ENCODE measurements at regions of chr3 and their contacts with region 1.

Region 1: DNA sequence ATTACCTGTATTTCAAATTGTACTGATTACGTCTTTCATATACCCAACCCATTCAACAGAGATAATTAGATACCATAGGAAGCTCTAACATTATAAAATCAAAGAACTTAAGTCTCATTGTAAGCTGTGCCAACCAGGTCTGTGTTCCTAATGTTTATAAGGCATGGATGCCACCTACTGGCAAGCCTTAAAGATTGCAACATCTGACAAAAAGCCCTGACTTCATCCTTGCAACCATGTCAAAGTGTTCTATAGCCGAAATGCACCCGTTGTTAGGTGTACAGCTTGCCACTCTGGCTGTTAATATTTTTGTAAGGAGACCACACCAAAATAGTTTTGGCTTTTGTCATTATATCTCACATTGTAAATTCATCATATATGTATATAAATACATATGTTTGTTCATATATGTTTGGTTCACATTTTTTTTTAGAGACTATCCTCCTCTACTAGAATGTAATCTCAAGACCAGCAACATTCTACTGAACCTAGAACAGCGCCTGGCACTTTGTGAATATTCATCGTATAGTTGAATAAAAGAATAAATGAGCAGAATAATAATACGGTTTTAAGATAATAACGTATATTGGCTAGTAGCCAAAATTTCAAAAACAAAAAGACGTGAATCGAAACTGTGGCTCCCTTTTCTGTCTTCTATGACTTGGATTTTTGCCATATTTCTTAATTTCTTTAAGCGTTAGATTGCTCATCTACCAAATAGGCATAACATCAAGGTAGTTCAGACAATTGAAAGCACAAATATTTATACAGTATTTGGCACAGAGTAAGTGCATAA is 258.1 kb downstream of the TBL1XR1 start:
- DNase-seq: peak; percentile 68
- H3K4me3 ChIP-seq: no peak overlapping the region
- H3K27ac ChIP-seq: no peak overlapping the region
- H3K4me1 ChIP-seq: peaks cover 0 to 2% of the 10 kb centered on the region in 2 experiments; a peak in 2 of 4 replicates
- H3K27me3 ChIP-seq: no peaks in the 10 kb centered on the region
- CTCF ChIP-seq: peak; percentile 88
- EP300 ChIP-seq: no peak
- RAD21 ChIP-seq: peak; percentile 94

Region 2: DNA sequence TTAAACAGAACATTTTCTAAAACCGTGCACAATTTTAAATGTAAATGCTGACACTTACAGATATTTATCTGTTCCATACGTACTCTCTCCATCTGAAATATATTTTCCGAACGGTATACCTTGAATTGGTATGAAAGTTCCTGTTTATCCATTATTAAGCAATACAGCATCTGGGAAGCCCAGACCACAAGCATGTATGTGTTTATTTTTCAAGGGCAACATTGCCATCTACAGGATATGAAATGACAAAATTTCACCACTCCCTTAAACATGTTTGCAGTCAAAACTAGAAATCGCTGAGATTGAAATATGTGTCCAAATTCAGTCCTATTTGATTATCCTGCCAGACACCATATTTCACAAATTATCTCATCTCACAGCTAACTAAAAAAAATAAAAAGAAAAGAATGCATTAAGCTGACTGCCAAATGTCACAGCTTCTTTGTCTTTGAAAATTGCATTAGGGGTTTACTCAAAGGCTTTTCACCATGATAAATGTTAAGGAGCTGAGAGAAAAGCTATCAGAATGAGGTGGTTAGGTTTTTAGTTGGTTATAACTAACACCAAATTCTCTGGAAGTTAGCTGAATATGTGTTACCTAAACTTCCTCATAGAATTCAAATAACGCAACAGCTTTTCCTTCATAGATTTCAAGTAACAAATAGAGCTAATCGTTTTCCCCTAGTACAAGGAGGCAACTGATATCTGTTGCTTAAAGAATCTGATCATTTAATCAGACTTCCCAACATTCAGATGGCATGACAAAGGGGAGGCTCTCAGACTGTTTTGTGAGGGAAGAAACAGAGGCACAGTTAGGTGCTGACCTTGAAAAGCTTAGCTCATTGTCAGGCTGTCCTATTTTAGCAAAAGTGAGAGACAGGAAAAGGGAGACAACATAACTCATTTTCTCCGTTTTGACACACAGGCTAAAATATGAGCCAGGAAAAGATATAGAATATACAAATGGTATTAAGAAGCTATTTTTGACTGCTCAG is 275.1 kb before region 1 on chr3:
- CTCF ChIA-PET with region 1: interaction called, 12 read pairs
- POLR2A ChIA-PET with region 1: no interaction called
- DNase-seq: peak; percentile 29
- H3K4me3 ChIP-seq: no peak overlapping the region
- H3K27ac ChIP-seq: peak overlapping the region in 1 of 2 experiments; percentile 22; a peak in 1 of 4 replicates
- H3K4me1 ChIP-seq: peaks cover 0 to 5% of the 10 kb centered on the region in 2 experiments; a peak in 2 of 4 replicates
- H3K27me3 ChIP-seq: no peaks in the 10 kb centered on the region
- CTCF ChIP-seq: peak; percentile 48
- EP300 ChIP-seq: no peak
- RAD21 ChIP-seq: peak; percentile 81

Region 3: DNA sequence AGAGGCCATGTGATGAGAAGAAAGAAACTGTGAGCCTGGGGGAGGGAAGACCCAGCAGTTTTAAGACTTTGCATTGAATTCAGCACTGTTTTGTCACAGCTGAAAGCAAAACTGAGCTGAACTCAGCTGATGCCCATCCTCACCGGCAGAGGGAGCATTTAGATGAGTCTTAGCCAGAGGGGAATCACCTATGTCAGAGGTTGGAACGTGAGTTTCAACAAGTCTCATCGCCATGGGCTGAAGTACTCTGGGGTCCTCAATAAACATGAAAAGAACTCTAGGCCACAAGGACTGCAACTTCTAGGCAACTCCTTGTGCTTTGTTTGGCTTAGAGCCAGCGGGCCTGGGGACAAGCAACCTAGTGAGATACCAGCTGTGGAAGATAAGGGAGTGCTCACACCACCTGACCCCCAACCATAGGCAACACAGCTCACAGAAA is 66.4 kb before region 1 on chr3:
- CTCF ChIA-PET with region 1: interaction called, 29 read pairs
- POLR2A ChIA-PET with region 1: no interaction called
- DNase-seq: peak; percentile 18
- H3K4me3 ChIP-seq: peak overlapping the region in 1 of 2 experiments; percentile 31; a peak in 1 of 4 replicates
- H3K27ac ChIP-seq: no peak overlapping the region
- H3K4me1 ChIP-seq: peaks cover 0 to 3% of the 10 kb centered on the region in 2 experiments; a peak in 1 of 4 replicates
- H3K27me3 ChIP-seq: no peaks in the 10 kb centered on the region
- CTCF ChIP-seq: peak; percentile 77
- EP300 ChIP-seq: no peak
- RAD21 ChIP-seq: peak; percentile 67

Measured in SK-N-SH (cell line).